Endothelial cell of umbilical vein (primary cell): ENCODE measurements at regions of chr1 and their contacts with region 1.

Region 1: DNA sequence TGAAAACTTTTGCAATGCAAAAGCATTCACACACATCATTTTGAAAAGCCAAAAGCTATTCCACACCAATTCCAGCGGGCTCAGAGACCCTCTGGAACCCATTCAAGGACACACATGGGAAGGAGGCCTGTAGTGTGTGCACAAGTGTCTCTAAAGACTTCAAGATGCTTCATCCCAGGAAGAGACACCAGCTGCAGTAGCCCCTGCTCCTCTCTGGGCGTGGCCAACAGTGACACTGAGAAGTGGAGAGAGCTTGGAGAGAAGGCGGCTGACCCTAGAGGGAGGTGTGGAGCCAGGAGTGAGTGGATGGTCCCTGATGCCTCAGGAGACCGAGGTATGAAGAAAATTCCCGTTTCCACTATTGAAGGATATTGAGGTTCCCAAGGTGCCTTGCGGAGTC is 14.9 kb upstream of the TNNI1 start:
- DNase-seq: no peak
- H3K4me3 ChIP-seq: no peak overlapping the region
- H3K27ac ChIP-seq: no peak overlapping the region
- H3K4me1 ChIP-seq: no peaks in the 10 kb centered on the region
- H3K27me3 ChIP-seq: peaks cover 12 to 14% of the 10 kb centered on the region in 2 experiments
- CTCF ChIP-seq: no peak
- POLR2A ChIP-seq: no peak

Region 2: GRCh38 chr1:201419746-201420607 is 16.4 kb before region 1 on chr1:
- CTCF ChIA-PET with region 1: interaction called, 11 read pairs
- POLR2A ChIA-PET with region 1: no interaction called
- dilution Hi-C with region 1: no loop called
- intact Hi-C with region 1: no loop called
- DNase-seq: no peak
- H3K4me3 ChIP-seq: no peak overlapping the region
- H3K27ac ChIP-seq: no peak overlapping the region
- H3K4me1 ChIP-seq: no peaks in the 10 kb centered on the region
- H3K27me3 ChIP-seq: peaks cover 7 to 18% of the 10 kb centered on the region in 2 experiments
- CTCF ChIP-seq: no peak
- POLR2A ChIP-seq: no peak

Region 3: GRCh38 chr1:201460814-201461657 is 24.6 kb after region 1 on chr1:
- CTCF ChIA-PET with region 1: interaction called, 45 read pairs
- POLR2A ChIA-PET with region 1: no interaction called
- dilution Hi-C with region 1: no loop called
- intact Hi-C with region 1: no loop called
- DNase-seq: peak; percentile 82
- H3K4me3 ChIP-seq: no peak overlapping the region
- H3K27ac ChIP-seq: no peak overlapping the region
- H3K4me1 ChIP-seq: peaks cover 13% of the 10 kb centered on the region
- H3K27me3 ChIP-seq: no peaks in the 10 kb centered on the region
- CTCF ChIP-seq: no peak
- POLR2A ChIP-seq: peak; percentile 53

Region 4: DNA sequence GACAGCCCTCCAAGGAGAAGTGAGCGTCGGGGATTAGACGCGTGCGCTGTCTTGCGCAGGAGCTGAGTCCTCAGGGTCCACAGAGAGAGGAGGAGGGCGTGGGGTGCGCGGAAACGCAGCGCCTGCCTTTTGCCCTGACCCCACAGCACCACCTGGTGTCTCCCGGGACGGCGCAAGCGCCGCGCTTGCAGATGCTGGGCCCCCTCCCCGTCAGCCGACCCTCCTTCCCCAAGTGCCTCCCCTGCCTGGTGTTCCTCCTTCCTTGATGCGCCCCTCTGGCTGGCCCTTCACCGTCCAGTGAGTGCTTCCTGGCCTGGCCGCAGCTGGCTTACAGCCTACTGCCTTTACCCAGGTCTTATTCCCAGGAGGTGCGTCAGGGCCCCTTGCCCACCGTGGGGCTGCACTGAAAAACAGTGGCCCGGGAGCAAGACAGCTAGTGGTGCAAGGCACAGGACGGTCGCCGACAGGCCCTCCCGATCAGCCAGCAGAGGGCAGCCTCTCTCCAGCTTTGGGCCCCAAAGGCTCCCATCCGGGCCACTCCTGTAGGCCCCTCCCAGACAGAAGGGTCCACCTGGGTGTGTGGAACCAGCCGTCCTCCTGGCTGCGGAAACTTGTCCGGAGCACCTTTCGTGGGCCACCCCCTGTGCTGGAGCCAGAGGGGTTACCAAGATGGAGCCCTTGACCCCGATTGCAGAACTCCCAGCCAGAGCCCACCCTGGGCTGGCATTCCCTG is 45.5 kb after region 1 on chr1:
- CTCF ChIA-PET with region 1: interaction called, 92 read pairs
- POLR2A ChIA-PET with region 1: no interaction called
- dilution Hi-C with region 1: no loop called
- intact Hi-C with region 1: loop called (anchors 2 kb)
- DNase-seq: peak; percentile 80
- H3K4me3 ChIP-seq: no peak overlapping the region
- H3K27ac ChIP-seq: no peak overlapping the region
- H3K4me1 ChIP-seq: peaks cover 25% of the 10 kb centered on the region
- H3K27me3 ChIP-seq: peaks cover 0 to 3% of the 10 kb centered on the region in 2 experiments
- CTCF ChIP-seq: peak; percentile 91 to 92
- POLR2A ChIP-seq: no peak

Region 5: DNA sequence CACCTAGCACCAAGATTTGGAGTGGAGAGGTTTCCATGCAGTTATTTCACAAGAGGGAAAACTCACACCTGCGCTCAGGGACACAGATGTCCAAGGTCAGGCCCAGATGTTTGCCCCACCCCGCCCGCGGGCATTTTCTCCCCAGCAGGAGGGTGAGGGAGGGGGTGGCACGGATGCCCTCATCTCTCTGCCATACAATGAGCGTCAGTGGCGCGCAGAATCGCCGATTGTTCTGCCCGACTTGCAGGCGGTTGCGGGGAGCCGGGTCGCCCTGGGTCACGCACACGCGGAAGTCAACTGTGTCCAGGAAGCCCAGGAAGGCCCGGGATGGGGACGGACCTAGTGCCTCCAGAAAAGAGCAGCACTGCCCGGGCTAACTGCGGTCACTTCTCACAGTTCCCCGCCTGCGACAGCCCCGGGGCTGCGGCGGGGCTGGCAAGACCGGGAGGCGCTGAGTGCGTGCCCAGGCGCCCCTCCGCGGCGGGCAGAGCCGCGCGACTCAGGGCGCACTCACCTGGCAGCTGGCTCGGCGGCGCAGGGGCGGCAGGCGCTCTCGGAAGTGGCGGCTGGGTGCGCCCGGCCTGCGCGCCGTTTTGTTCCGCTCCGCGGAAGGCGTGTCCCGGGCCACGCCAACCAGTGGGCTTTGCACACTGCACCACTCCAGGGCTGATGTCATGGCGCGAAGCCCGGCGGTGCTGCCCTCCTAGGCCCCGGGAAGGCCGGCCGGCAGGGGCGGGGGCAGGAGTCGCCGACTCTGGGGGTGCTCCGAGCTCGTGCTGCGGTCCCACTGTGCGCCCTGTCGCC is 70.4 kb after region 1 on chr1 and contains the start of gene CSRP1:
- CTCF ChIA-PET with region 1: interaction called, 140 read pairs
- POLR2A ChIA-PET with region 1: no interaction called
- dilution Hi-C with region 1: no loop called
- intact Hi-C with region 1: no loop called
- DNase-seq: peak; percentile 74
- H3K4me3 ChIP-seq: peak within 1 kb of the TSS; percentile 47 to 84 (median 72)
- H3K27ac ChIP-seq: peak within 1 kb of the TSS; percentile 89
- H3K4me1 ChIP-seq: peaks cover 49% of the 10 kb centered on the region
- H3K27me3 ChIP-seq: no peaks in the 10 kb centered on the region
- CTCF ChIP-seq: no peak
- POLR2A ChIP-seq: peak; percentile 96
- total RNA-seq, gene CSRP1: 332 and 393 TPM in 2 replicates

Region 6: GRCh38 chr1:201610858-201611257 is 174.5 kb after region 1 on chr1:
- CTCF ChIA-PET with region 1: no interaction called
- POLR2A ChIA-PET with region 1: no interaction called
- dilution Hi-C with region 1: no loop called
- intact Hi-C with region 1: no loop called
- DNase-seq: no peak
- H3K4me3 ChIP-seq: no peak overlapping the region
- H3K27ac ChIP-seq: no peak overlapping the region
- H3K4me1 ChIP-seq: peaks cover 27% of the 10 kb centered on the region
- H3K27me3 ChIP-seq: no peaks in the 10 kb centered on the region
- CTCF ChIP-seq: no peak
- POLR2A ChIP-seq: no peak

Region 7: GRCh38 chr1:201739492-201740085 is 303.2 kb after region 1 on chr1:
- CTCF ChIA-PET with region 1: no interaction called
- POLR2A ChIA-PET with region 1: no interaction called
- dilution Hi-C with region 1: no loop called
- intact Hi-C with region 1: no loop called
- DNase-seq: peak; percentile 61
- H3K4me3 ChIP-seq: peak overlapping the region; percentile 69 to 92 (median 91)
- H3K27ac ChIP-seq: peak overlapping the region; percentile 44
- H3K4me1 ChIP-seq: peaks cover 27% of the 10 kb centered on the region
- H3K27me3 ChIP-seq: no peaks in the 10 kb centered on the region
- CTCF ChIP-seq: peak in 1 of 2 donors; percentile 13
- POLR2A ChIP-seq: no peak